Ovary (tissue), 10 donors: ENCODE measurements at regions of chr1 and their contacts with region 1.

Region 1: GRCh38 chr1:81071072-81071858 is 729.5 kb upstream of the ADGRL2 start:
- DNase-seq: no peak
- H3K4me3 ChIP-seq: no peak overlapping the region
- H3K27ac ChIP-seq: no peak overlapping the region
- H3K4me1 ChIP-seq: no peaks in the 10 kb centered on the region
- H3K27me3 ChIP-seq: no peaks in the 10 kb centered on the region
- CTCF ChIP-seq: no peak
- EP300 ChIP-seq: no peak
- POLR2A ChIP-seq: no peak

Region 2: DNA sequence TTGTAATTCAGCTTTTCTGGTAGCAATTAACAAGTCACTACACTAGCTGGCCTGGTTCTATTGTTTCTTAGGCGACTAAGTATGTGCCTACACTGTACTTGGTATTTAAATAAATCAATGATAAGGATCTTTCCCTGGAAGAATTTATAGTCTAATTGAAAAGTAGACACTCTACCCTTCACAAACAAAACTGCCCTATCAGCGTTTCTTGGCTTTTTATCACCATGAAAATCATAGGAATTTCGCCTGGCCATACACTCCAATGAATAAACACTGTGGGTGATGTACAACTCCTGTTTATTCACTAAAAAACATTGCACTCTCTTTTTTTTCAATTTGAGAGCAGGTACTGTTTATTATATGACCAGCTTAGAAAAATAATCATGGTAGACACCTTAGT is 26.6 kb after region 1 on chr1:
- intact Hi-C with region 1: loop called in 1 of 4 experiments (anchors 1 kb)
- DNase-seq: no peak
- H3K4me3 ChIP-seq: no peak overlapping the region
- H3K27ac ChIP-seq: no peak overlapping the region
- H3K4me1 ChIP-seq: no peaks in the 10 kb centered on the region
- H3K27me3 ChIP-seq: no peaks in the 10 kb centered on the region
- CTCF ChIP-seq: no peak
- EP300 ChIP-seq: no peak
- POLR2A ChIP-seq: no peak

Region 3: GRCh38 chr1:81113688-81114087 is 42.4 kb after region 1 on chr1:
- intact Hi-C with region 1: no loop called
- DNase-seq: no peak
- H3K4me3 ChIP-seq: no peak overlapping the region
- H3K27ac ChIP-seq: no peak overlapping the region
- H3K4me1 ChIP-seq: no peaks in the 10 kb centered on the region
- H3K27me3 ChIP-seq: no peaks in the 10 kb centered on the region
- CTCF ChIP-seq: no peak
- EP300 ChIP-seq: no peak
- POLR2A ChIP-seq: no peak

Region 4: GRCh38 chr1:81225789-81226602 is 154.7 kb after region 1 on chr1:
- intact Hi-C with region 1: no loop called
- DNase-seq: no peak
- H3K4me3 ChIP-seq: no peak overlapping the region
- H3K27ac ChIP-seq: no peak overlapping the region
- H3K4me1 ChIP-seq: peaks cover 2% of the 10 kb centered on the region
- H3K27me3 ChIP-seq: no peaks in the 10 kb centered on the region
- CTCF ChIP-seq: no peak
- EP300 ChIP-seq: no peak
- POLR2A ChIP-seq: no peak

Region 5: GRCh38 chr1:81340239-81340638 is 269.0 kb after region 1 on chr1:
- intact Hi-C with region 1: no loop called
- DNase-seq: no peak
- H3K4me3 ChIP-seq: no peak overlapping the region
- H3K27ac ChIP-seq: no peak overlapping the region
- H3K4me1 ChIP-seq: no peaks in the 10 kb centered on the region
- H3K27me3 ChIP-seq: no peaks in the 10 kb centered on the region
- CTCF ChIP-seq: no peak
- EP300 ChIP-seq: no peak
- POLR2A ChIP-seq: no peak